CD8-positive, alpha-beta T cell (primary cell): ENCODE measurements at regions of chr7 and their contacts with region 1.

Region 1: GRCh38 chr7:77734659-77735421 is 38.6 kb downstream of the RSBN1L start:
- DNase-seq: no peak
- ATAC-seq: no peak
- H3K4me3 ChIP-seq: no peak overlapping the region
- H3K4me3 Mint-ChIP-seq: no peak overlapping the region
- H3K27ac ChIP-seq: no peak overlapping the region
- H3K27ac Mint-ChIP-seq: no peak overlapping the region
- H3K4me1 ChIP-seq: peaks cover 15% of the 10 kb centered on the region
- H3K4me1 Mint-ChIP-seq: peaks cover 47% of the 10 kb centered on the region
- H3K27me3 ChIP-seq: no peaks in the 10 kb centered on the region
- H3K27me3 Mint-ChIP-seq: no peaks in the 10 kb centered on the region
- CTCF ChIP-seq: no peak

Region 2: DNA sequence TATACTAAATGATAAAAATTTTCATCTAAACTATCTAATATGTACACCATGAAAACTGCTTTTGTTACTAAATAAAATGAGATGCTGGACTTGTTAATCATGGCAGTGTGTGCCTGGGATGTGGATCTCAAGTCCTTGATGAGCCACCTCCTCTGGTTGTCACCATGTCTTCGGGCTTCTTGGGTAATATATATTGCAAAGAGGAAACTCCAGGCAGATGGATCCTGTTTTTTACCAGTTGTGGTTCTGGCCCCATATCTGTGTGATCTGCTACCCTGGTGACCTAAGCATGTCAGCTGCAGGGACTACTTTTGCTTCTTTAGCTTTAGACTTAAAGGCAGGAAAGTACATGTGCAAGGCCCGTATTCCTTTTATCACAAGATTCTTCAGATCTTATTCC is 17.2 kb after region 1 on chr7:
- CTCF ChIA-PET with region 1: interaction called, 3 read pairs
- POLR2A ChIA-PET with region 1: no interaction called
- intact Hi-C with region 1: loop called (anchors 2 kb)
- DNase-seq: peak in 1 of 9 experiments; percentile 14
- ATAC-seq: no peak
- H3K4me3 ChIP-seq: no peak overlapping the region
- H3K4me3 Mint-ChIP-seq: peak overlapping the region; percentile 1
- H3K27ac ChIP-seq: no peak overlapping the region
- H3K27ac Mint-ChIP-seq: peak overlapping the region; percentile 81
- H3K4me1 ChIP-seq: peaks cover 23% of the 10 kb centered on the region
- H3K4me1 Mint-ChIP-seq: peaks cover 66% of the 10 kb centered on the region
- H3K27me3 ChIP-seq: no peaks in the 10 kb centered on the region
- H3K27me3 Mint-ChIP-seq: no peaks in the 10 kb centered on the region
- CTCF ChIP-seq: no peak

Region 3: GRCh38 chr7:77765906-77766800 is 31.3 kb after region 1 on chr7:
- CTCF ChIA-PET with region 1: no interaction called
- POLR2A ChIA-PET with region 1: no interaction called
- intact Hi-C with region 1: no loop called
- DNase-seq: no peak
- ATAC-seq: no peak
- H3K4me3 ChIP-seq: no peak overlapping the region
- H3K4me3 Mint-ChIP-seq: no peak overlapping the region
- H3K27ac ChIP-seq: no peak overlapping the region
- H3K27ac Mint-ChIP-seq: no peak overlapping the region
- H3K4me1 ChIP-seq: no peaks in the 10 kb centered on the region
- H3K4me1 Mint-ChIP-seq: peaks cover 33% of the 10 kb centered on the region
- H3K27me3 ChIP-seq: no peaks in the 10 kb centered on the region
- H3K27me3 Mint-ChIP-seq: no peaks in the 10 kb centered on the region
- CTCF ChIP-seq: no peak